ENCODE measurements at regions of chr21 and their contacts with region 1.

Region 1: DNA sequence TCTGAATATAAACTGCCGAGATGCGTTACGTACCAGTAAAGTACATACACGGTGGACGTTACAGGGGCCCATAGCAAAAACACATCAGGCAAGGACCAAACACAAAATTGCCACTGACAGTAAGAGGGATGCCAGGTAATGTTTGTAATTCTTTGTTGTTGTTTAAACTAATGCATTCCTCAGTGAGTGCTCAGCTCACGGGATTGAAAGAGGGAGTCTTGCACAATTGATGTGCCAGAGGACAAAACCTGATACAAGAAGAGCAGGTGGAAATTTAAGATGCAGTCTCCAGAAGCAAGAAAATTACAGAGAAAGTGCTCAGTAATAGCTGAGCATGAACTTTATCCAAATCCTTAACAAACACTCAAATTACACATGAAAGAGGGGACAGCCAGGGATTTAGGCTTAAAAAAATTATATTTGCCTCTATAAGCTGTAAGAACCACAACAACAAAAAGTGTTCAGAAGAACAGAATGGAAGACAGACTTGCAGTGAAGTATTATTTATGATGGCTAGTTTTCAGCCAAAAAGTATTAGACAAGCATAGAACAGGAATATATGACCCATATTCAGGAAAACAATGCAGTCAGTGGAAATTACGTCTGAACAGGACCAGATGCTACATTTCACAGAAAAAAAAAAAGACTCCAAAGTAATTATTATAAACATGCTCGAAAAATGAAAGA is 1246.2 kb downstream of the NCAM2 start:
- DNase-seq: no peak
- H3K4me3 ChIP-seq: no peak overlapping the region
- H3K27ac ChIP-seq: no peak overlapping the region
- H3K4me1 ChIP-seq: no peaks in the 10 kb centered on the region
- H3K27me3 ChIP-seq: no peaks in the 10 kb centered on the region
- CTCF ChIP-seq: no peak
- EP300 ChIP-seq: no peak
- POLR2A ChIP-seq: no peak

Region 2: GRCh38 chr21:21801921-21802320 is 442.5 kb before region 1 on chr21:
- intact Hi-C with region 1: loop called in 1 of 4 experiments (anchors 5 kb)
- DNase-seq: no peak
- H3K4me3 ChIP-seq: no peak overlapping the region
- H3K27ac ChIP-seq: no peak overlapping the region
- H3K4me1 ChIP-seq: no peaks in the 10 kb centered on the region
- H3K27me3 ChIP-seq: no peaks in the 10 kb centered on the region
- CTCF ChIP-seq: no peak
- EP300 ChIP-seq: no peak
- POLR2A ChIP-seq: no peak

Region 3: DNA sequence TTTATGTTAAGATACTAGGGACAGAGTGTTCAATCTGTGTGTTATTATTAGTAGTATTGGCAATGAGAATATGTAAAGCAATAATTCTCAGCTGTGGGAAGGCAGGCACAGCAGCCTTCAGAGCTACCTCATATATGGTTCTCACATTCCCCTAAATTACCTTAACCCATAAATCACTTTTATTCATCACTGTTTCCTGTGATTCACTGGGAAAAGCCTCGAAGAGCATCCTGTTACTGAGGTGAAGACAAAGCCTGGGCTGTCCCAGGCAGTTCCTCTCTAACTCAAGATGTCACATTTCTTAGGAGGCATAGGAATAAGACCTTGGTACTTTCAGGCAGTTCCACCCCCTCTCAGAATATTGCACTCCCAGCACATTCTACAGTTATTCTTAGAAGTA is 280.5 kb before region 1 on chr21:
- intact Hi-C with region 1: no loop called
- DNase-seq: no peak
- H3K4me3 ChIP-seq: no peak overlapping the region
- H3K27ac ChIP-seq: no peak overlapping the region
- H3K4me1 ChIP-seq: no peaks in the 10 kb centered on the region
- H3K27me3 ChIP-seq: no peaks in the 10 kb centered on the region
- CTCF ChIP-seq: no peak
- EP300 ChIP-seq: no peak
- POLR2A ChIP-seq: no peak

Region 4: DNA sequence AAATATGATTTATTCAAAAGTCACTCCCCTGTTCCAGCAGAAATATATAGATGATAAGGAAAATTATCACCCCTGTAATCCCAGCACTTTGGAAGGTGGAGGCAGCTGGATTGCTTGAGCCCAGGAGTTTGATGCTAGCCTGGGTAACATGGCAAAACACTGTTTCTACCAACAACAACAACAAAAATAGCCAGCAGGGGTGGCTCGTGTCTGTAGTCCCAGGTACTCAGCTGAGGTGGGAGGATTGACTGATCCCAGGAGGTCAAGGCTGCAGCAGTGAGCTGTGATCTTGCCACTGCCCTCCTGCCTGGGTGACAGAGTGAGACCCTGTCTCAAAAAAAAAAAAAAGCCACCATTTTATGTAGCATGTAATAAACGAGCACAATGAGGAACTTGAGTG is 300.4 kb after region 1 on chr21:
- intact Hi-C with region 1: no loop called
- DNase-seq: no peak
- H3K4me3 ChIP-seq: no peak overlapping the region
- H3K27ac ChIP-seq: no peak overlapping the region
- H3K4me1 ChIP-seq: no peaks in the 10 kb centered on the region
- H3K27me3 ChIP-seq: no peaks in the 10 kb centered on the region
- CTCF ChIP-seq: no peak
- EP300 ChIP-seq: no peak
- POLR2A ChIP-seq: no peak

Measured in ovary (tissue), 10 donors.